Right cardiac atrium (tissue), 5 donors: ENCODE measurements at regions of chr12 and their contacts with region 1.

Region 1: GRCh38 chr12:108562348-108563135 is at the start of gene ISCU:
- DNase-seq: peak; percentile 99
- ATAC-seq: peak; percentile 92
- H3K4me3 ChIP-seq: peak within 1 kb of the TSS; percentile 65
- H3K27ac ChIP-seq: peak within 1 kb of the TSS; percentile 90
- H3K4me1 ChIP-seq: peaks cover 13% of the 10 kb centered on the region
- H3K27me3 ChIP-seq: no peaks in the 10 kb centered on the region
- total RNA-seq, gene ISCU: 276 to 363 (median 303) TPM

Region 2: DNA sequence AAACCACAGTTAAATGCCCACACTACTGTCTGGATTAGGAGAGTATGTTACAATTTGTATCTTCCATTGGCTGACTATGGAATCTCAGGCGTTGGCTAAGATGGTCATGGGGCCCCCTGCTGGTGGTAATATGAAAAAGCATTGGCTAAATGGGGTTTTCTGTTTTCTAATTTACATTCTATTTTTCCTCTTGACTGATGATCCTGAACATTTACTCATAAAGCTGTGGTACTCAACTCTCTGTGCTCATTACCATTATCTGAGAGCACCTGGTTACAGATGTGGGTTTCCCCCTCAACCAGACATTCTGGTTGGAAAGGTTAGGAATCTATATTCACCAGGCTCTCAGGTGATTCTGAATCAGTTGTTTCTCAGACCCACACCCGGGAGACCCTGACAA is 368.6 kb before region 1 on chr12:
- intact Hi-C with region 1: no loop called
- DNase-seq: no peak
- ATAC-seq: peak in 1 of 2 donors; percentile 26
- H3K4me3 ChIP-seq: no peak overlapping the region
- H3K27ac ChIP-seq: no peak overlapping the region
- H3K4me1 ChIP-seq: no peaks in the 10 kb centered on the region
- H3K27me3 ChIP-seq: no peaks in the 10 kb centered on the region

Region 3: GRCh38 chr12:108597559-108598471 is 35.3 kb after region 1 on chr12 and contains the start of gene TMEM119:
- intact Hi-C with region 1: no loop called
- DNase-seq: peak; percentile 45 to 80 (median 77)
- ATAC-seq: peak; percentile 53 to 57
- H3K4me3 ChIP-seq: peak within 1 kb of the TSS; percentile 12
- H3K27ac ChIP-seq: no peak within 1 kb of the TSS
- H3K4me1 ChIP-seq: no peaks in the 10 kb centered on the region
- H3K27me3 ChIP-seq: no peaks in the 10 kb centered on the region
- total RNA-seq, gene TMEM119: 1.8 to 3.5 (median 2.6) TPM

Region 4: GRCh38 chr12:108618079-108618952 is 55.8 kb after region 1 on chr12:
- intact Hi-C with region 1: loop called in 2 of 4 experiments (anchors 2 to 5 kb)
- DNase-seq: peak; percentile 79 to 91 (median 91)
- ATAC-seq: peak; percentile 78 to 81
- H3K4me3 ChIP-seq: no peak overlapping the region
- H3K27ac ChIP-seq: no peak overlapping the region
- H3K4me1 ChIP-seq: no peaks in the 10 kb centered on the region
- H3K27me3 ChIP-seq: no peaks in the 10 kb centered on the region

Region 5: DNA sequence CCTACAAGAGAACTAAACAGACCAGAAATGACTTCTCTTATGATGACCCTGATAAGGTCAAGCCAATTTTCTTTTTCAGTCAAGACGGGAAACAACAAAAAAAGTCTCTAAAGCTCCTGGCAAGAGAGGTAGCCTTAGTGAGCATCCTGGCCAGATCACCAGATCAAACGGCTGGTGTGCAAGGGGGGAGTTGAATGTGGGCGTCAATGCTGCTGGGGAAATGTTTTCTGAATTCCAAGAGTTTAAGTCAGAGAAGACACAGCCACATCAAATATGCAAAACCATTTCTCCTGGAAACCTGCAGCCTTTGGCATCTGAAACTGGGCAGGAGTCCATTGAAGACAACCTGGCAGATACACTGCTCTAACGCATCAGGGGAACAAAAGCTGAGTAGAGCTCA is 87.1 kb after region 1 on chr12:
- intact Hi-C with region 1: no loop called
- DNase-seq: peak in 1 of 3 donors; percentile 42
- ATAC-seq: peak in 1 of 2 donors; percentile 10
- H3K4me3 ChIP-seq: no peak overlapping the region
- H3K27ac ChIP-seq: peak overlapping the region; percentile 50
- H3K4me1 ChIP-seq: peaks cover 5% of the 10 kb centered on the region
- H3K27me3 ChIP-seq: no peaks in the 10 kb centered on the region

Region 6: DNA sequence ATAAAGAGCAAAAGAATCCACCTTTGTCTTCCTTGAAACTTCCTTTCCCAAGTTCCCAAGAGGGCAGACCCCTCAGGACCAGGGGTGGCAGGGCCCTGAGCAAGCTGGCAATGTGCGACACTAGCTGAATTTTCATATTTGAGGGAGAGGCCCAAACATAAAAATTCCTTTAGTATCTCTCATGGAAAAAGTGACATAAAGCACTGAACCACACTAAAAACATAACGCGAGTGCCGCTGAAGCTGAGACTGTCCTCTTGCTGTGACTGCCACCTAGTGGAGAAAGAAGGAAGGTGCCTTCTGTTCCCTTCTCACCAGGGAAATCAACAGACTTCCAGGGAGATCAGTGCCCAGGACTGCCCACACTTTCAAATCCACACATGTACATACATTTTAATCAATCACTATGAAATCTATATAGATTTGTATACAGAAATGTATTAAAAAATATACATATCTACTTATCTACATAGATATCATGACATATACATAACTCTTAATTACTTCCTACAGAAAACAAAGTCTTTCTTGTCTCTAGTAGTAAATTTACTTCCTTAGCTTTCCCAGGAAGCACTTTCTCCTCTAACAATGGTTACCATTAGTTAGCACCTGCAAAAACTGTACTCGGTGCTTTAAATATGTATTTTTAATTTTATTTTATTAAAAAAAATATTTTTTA is 241.0 kb after region 1 on chr12:
- intact Hi-C with region 1: loop called in 2 of 4 experiments (anchors 10 kb)
- DNase-seq: peak; percentile 64 to 80 (median 67)
- ATAC-seq: peak; percentile 68 to 71
- H3K4me3 ChIP-seq: no peak overlapping the region
- H3K27ac ChIP-seq: peak overlapping the region; percentile 96
- H3K4me1 ChIP-seq: peaks cover 15% of the 10 kb centered on the region
- H3K27me3 ChIP-seq: no peaks in the 10 kb centered on the region

Region 7: DNA sequence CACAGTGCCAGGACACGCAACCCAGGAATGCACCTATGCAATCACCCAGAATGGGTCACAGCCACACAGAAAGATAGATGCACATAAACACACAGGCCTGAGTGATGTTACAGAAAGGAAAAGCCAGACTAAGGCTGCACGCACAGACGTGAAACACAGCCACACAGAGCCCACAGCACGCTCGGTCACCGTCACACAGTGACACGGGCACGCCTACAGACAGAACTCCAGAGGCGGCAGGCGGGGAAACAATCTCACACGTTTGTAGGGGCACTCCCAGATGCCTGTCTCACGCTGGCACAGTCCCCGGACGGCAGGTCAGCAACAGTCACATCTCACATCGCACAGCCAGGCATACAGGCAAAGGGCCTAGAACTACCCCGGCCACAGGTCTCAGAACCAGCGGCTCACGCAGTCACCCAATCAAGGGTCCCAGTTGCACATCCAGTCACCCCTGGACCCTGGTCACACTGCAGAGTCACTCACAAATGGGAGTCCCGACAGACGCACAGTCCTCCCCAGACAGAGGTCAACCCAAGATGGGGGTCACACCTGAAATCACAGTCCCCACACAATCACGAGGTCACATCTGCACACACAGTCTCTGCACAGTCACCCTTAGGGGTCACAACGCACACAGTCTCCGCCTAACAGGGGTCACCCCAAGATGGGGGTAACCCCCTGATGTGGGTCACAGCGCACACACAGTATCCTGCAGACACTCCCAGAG is 294.1 kb after region 1 on chr12:
- intact Hi-C with region 1: loop called in 1 of 4 experiments (anchors 10 kb)
- DNase-seq: peak; percentile 83 to 92 (median 92)
- ATAC-seq: peak; percentile 51 to 59
- H3K4me3 ChIP-seq: peak overlapping the region; percentile 90
- H3K27ac ChIP-seq: peak overlapping the region; percentile 87
- H3K4me1 ChIP-seq: peaks cover 24% of the 10 kb centered on the region
- H3K27me3 ChIP-seq: no peaks in the 10 kb centered on the region

Region 8: DNA sequence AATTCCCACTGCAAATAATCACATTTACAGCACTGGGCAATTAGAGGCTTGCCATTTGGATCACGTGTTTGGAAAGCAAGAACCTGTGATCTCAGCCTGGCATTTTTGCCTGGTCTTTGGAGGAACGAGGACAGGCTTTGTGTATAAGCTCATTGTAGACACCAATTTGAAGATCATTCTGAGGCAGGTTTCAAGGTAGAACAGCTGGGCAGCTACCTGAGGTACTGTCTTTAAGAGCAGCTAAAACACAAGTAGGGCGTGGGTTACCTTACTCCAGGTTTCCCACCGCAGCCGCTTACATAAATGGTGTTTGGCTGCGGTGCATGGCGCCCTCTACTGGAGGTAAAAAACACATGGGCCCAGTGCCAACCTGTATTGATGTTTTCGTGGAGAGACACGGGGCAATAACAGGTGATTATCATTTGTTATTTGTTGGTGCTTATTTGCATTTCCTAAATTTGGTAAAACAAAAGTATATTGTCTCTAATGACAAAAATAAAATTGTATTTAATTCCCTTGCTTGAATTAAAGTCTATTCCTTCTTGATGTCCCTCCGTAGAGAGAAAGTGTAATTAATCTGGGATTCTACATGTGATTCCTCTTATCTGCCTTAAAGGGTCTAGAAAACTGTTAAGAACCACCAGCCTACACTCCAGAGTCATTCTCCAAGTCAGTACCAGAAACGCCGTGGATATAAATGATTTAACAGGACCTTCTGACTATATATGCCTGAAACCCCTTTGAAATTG is 388.6 kb after region 1 on chr12:
- intact Hi-C with region 1: loop called in 1 of 4 experiments (anchors 5 kb)
- DNase-seq: peak; percentile 44 to 85 (median 75)
- ATAC-seq: peak; percentile 66 to 69
- H3K4me3 ChIP-seq: no peak overlapping the region
- H3K27ac ChIP-seq: no peak overlapping the region
- H3K4me1 ChIP-seq: no peaks in the 10 kb centered on the region
- H3K27me3 ChIP-seq: no peaks in the 10 kb centered on the region

Region 9: DNA sequence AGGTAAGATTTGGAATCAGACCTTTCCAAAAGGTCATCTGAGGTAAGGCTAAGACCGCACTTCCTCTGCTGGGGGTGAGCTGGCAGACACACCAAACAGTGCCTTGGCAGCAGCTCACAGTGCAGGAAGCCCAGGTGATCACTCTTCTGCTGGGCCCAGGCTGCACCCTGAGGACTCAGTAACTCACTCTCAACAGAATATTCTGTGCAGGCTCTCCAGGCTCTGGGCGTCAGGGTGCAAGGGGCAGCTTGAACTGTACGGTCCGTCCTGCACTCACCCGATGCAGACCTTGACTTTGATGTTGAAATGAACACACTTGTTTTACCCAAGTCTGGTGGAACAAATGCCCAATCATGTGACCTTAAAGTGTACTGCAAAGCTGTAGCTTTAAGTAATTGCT is 524.7 kb after region 1 on chr12:
- intact Hi-C with region 1: loop called in 3 of 4 experiments (anchors 5 to 10 kb)
- DNase-seq: no peak
- ATAC-seq: peak in 1 of 2 donors; percentile 27
- H3K4me3 ChIP-seq: no peak overlapping the region
- H3K27ac ChIP-seq: no peak overlapping the region
- H3K4me1 ChIP-seq: no peaks in the 10 kb centered on the region
- H3K27me3 ChIP-seq: no peaks in the 10 kb centered on the region

Region 10: GRCh38 chr12:109093022-109093918 is 530.7 kb after region 1 on chr12 and contains the start of gene ALKBH2:
- intact Hi-C with region 1: loop called in 3 of 4 experiments (anchors 5 to 10 kb)
- DNase-seq: peak; percentile 95 to 98 (median 97)
- ATAC-seq: peak; percentile 78 to 82
- H3K4me3 ChIP-seq: peak within 1 kb of the TSS; percentile 66
- H3K27ac ChIP-seq: peak within 1 kb of the TSS; percentile 16
- H3K4me1 ChIP-seq: peaks cover 3% of the 10 kb centered on the region
- H3K27me3 ChIP-seq: no peaks in the 10 kb centered on the region
- total RNA-seq, gene ALKBH2: 7.4 to 12.2 (median 7.6) TPM